ENCODE measurements at regions of chr3 and their contacts with region 1.

Region 1: DNA sequence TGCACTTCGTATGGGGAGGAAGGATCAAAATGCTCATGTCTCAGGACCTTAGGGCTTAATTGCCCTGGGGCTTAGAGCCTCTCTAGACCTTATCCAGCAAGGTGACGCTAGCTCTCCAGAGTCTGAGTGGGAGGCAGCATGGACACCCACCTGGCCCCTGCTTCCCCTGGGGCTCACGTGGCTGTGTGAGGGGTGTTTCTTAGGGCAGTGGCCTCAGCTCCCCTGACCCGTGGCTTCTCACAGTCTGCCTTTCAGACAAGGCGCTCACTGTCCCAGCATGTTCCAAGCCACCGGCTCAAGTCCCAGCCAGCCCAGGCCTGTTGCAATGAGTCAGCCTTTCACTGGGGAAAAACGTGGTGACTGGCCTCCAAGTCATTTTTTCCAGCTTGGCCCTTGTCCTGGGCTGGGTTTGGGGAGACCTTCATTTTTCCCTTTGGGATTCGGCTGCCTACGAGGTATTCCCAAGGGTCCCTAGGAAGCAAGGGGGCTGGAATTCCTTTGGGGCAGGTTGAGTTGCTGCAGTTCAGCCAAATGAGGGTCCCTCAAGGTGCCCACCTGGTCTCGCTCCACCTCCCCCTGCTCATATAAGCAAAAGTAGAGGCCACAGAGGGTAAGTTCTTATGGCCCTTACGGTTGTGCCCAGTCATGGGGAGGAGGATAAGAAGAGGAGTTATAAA is 15.7 kb downstream of the BHLHE40 start:
- DNase-seq: peak; percentile 84 to 92
- ATAC-seq: peak; percentile 91 to 95 (median 92)
- H3K4me3 ChIP-seq: no peak overlapping the region
- H3K27ac ChIP-seq: peak overlapping the region; percentile 91
- H3K4me1 ChIP-seq: peaks cover 25% of the 10 kb centered on the region
- H3K27me3 ChIP-seq: no peaks in the 10 kb centered on the region
- CTCF ChIP-seq: no peak

Region 2: DNA sequence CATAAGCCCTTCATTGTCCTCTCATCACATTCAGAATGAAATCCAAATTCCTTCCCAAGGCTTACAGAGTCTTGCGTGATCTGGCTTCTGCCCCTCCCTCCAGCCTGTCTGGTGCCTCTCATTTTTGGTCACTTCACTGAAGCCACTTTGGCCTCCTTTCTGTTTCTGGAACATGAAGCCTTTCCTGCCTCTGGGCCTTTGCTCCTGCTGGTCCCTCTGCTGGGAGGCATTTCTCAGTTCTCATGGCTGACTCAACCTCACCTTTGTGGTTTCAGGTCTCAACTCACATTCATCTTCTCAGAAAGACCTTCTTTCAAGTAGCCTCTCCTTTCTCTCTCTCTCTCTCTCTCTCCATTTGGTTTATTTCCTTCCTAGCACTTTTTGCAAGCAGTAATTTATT is 59.6 kb before region 1 on chr3:
- intact Hi-C with region 1: no loop called
- DNase-seq: no peak
- ATAC-seq: no peak
- H3K4me3 ChIP-seq: no peak overlapping the region
- H3K27ac ChIP-seq: no peak overlapping the region
- H3K4me1 ChIP-seq: no peaks in the 10 kb centered on the region
- H3K27me3 ChIP-seq: no peaks in the 10 kb centered on the region
- CTCF ChIP-seq: no peak

Region 3: GRCh38 chr3:5021116-5022092 is 26.4 kb after region 1 on chr3:
- intact Hi-C with region 1: loop called in 1 of 2 experiments (anchors 2 kb)
- DNase-seq: no peak
- ATAC-seq: no peak
- H3K4me3 ChIP-seq: no peak overlapping the region
- H3K27ac ChIP-seq: peak overlapping the region; percentile 80
- H3K4me1 ChIP-seq: peaks cover 19% of the 10 kb centered on the region
- H3K27me3 ChIP-seq: no peaks in the 10 kb centered on the region
- CTCF ChIP-seq: no peak

Region 4: GRCh38 chr3:5047764-5048163 is 52.8 kb after region 1 on chr3:
- intact Hi-C with region 1: loop called in 1 of 2 experiments (anchors 2 kb)
- DNase-seq: no peak
- ATAC-seq: no peak
- H3K4me3 ChIP-seq: no peak overlapping the region
- H3K27ac ChIP-seq: no peak overlapping the region
- H3K4me1 ChIP-seq: peaks cover 23% of the 10 kb centered on the region
- H3K27me3 ChIP-seq: no peaks in the 10 kb centered on the region
- CTCF ChIP-seq: no peak